Dorsolateral prefrontal cortex (tissue), 120 donors: ENCODE measurements at regions of chr11 and their contacts with region 1.

Region 1: GRCh38 chr11:129364143-129364654 is 11.4 kb upstream of the BARX2 start:
- DNase-seq: peak; percentile 20 to 80 (median 64)
- H3K4me3 ChIP-seq: peak overlapping the region in 3 of 59 donors; percentile 21 to 24 (median 21)
- H3K27ac ChIP-seq: no peak overlapping the region
- H3K27me3 ChIP-seq: peaks cover 0 to 63% (median 38%) of the 10 kb centered on the region in 45 donors
- CTCF ChIP-seq: peak; percentile 49 to 98 (median 91)

Region 2: DNA sequence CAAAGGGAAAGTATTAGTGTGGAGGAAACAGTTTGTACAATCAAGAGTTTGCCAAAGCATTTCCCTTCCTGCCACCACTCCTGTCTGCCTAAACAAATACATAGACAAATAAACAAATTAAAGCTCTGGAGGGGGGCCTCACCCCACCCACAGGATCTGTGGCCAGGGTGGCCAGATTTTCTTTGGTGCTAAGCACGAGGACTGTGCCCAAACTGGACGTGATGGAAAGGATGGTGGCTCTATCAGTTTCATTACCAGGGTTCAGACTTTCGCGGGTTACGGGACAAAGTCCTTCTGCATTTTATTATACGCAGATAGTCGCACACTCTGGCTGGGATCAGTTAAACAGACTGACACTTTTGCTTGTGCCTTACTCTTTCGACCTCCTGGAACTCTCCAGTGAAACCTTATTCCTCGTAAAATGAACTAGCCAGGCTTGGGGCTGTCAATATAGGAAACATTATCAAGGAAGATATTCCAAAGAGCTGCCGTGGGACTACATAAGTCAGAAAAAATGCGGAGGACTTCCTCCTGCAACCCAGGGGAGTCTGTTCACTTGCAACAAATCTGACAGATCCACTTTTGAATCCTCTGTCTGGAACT is 22.7 kb after region 1 on chr11:
- intact Hi-C with region 1: no loop called
- DNase-seq: no peak
- H3K4me3 ChIP-seq: no peak overlapping the region
- H3K27ac ChIP-seq: no peak overlapping the region
- H3K27me3 ChIP-seq: peaks cover 0 to 68% (median 23%) of the 10 kb centered on the region in 45 donors
- CTCF ChIP-seq: no peak

Region 3: GRCh38 chr11:129402772-129403171 is 38.6 kb after region 1 on chr11:
- intact Hi-C with region 1: no loop called
- DNase-seq: no peak
- H3K4me3 ChIP-seq: no peak overlapping the region
- H3K27ac ChIP-seq: no peak overlapping the region
- H3K27me3 ChIP-seq: peaks cover 0 to 14% (median 0%) of the 10 kb centered on the region in 45 donors
- CTCF ChIP-seq: no peak

Region 4: DNA sequence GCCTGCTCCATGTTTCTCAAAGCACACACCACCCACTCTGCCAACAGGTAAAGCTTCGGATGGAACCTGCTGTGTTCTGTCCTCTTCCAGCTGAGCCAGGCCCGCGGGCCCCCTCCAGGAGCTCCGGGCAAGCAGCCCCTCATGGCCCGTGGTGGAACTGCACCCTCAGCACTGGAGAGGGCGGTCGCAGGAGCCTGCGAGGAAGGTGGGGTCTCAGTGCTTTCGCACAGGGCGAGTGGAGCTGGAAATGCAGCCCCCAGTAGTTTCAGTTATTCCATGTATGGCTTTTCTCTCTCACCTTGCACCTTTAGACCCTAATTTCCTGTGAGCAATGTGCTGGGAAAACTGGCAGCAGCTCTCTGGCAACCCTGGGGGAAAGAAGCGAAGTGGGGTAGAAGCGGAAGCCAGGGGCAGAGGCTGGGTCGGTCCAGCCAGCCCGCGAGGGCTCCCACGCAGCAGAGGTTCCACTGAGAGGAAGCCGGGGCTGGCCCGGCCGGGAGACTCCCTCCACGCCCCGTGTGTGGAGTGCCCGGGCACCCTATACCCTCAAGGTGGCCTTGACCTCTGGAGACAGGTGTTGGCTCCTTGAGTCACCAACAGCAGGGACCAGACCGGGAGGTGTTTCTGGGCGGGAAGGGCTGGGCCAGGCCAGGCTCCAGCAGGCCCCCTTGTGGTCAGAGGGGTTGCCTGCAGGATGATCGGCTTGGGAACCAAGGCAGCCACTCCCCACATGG is 331.5 kb after region 1 on chr11:
- intact Hi-C with region 1: loop called in 1 of 2 experiments (anchors 5 kb)
- DNase-seq: peak in 8 of 10 donors; percentile 18 to 67 (median 34)
- H3K4me3 ChIP-seq: peak overlapping the region in 54 of 59 donors; percentile 10 to 67 (median 44)
- H3K27ac ChIP-seq: no peak overlapping the region
- H3K27me3 ChIP-seq: peaks cover 0 to 30% (median 0%) of the 10 kb centered on the region in 45 donors
- CTCF ChIP-seq: peak in 54 of 56 donors; percentile 37 to 75 (median 65)

Region 5: GRCh38 chr11:129750349-129751292 is 386.4 kb after region 1 on chr11:
- intact Hi-C with region 1: loop called in 1 of 2 experiments (anchors 2 kb)
- DNase-seq: peak; percentile 37 to 86 (median 62)
- H3K4me3 ChIP-seq: peak overlapping the region in 55 of 59 donors; percentile 9 to 62 (median 43)
- H3K27ac ChIP-seq: peak overlapping the region in 6 of 59 donors; percentile 2 to 65 (median 34)
- H3K27me3 ChIP-seq: peaks cover 0 to 9% (median 0%) of the 10 kb centered on the region in 45 donors
- CTCF ChIP-seq: peak; percentile 83 to 100 (median 100)